Motor neuron (in vitro differentiated cells): ENCODE measurements at regions of chr12 and their contacts with region 1.

Region 1: GRCh38 chr12:51270067-51270970 is at the start of gene SMAGP:
- ATAC-seq: peak; percentile 42 to 86 (median 82)
- H3K4me3 ChIP-seq: peak within 1 kb of the TSS; percentile 41 to 54 (median 50)
- H3K27ac ChIP-seq: no peak within 1 kb of the TSS
- H3K4me1 ChIP-seq: peaks cover 7 to 11% of the 10 kb centered on the region in 2 donors
- total RNA-seq, gene SMAGP: 0.79 to 110 (median 2.9) TPM

Region 2: GRCh38 chr12:51326762-51327439 is 56.6 kb after region 1 on chr12:
- in situ Hi-C with region 1: loop called in 1 of 9 experiments (anchors 10 kb)
- ATAC-seq: peak in 5 of 8 experiments; percentile 10 to 90 (median 37)
- H3K4me3 ChIP-seq: no peak overlapping the region
- H3K27ac ChIP-seq: no peak overlapping the region
- H3K4me1 ChIP-seq: no peaks in the 10 kb centered on the region